ENCODE measurements at regions of chrX and their contacts with region 1.

Region 1: DNA sequence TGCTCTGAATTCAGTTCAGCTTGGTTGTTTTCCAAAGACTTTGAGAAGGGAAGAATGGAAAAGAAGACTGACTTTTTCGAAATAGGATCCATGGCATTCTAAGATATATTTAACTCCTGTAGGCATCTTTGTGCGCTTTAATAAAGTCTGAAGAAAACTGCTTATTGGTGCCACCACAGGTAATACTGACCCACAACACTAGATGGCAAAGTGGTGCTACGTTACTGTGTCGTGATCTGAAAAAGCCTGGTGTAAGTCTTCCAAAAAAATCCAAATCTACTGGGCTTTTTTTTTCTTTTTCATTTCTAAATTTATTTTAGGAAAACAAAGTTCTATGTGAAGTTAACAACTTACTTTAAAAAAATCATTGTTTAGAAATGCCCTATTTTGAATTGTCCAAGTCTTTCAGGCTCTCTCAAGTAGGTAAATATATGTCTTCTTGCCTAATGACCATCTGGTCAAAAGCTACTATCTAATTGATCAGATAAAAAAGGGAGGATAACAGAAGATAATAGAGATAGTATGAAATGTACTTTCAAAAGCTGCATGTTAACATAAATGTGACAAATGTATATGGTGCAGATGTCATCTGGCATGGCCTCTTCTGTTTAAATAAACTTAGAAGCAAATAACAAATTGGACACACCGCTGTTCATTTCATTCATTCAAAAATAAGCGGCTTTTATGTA is 47.0 kb upstream of the MID1IP1 start:
- DNase-seq: peak in 1 of 2 donors; percentile 16
- H3K4me3 ChIP-seq: no peak overlapping the region
- CTCF ChIP-seq: no peak
- POLR2A ChIP-seq: no peak

Region 2: GRCh38 chrX:37697169-37697760 is 1057.0 kb before region 1 on chrX:
- intact Hi-C with region 1: no loop called
- DNase-seq: no peak
- H3K4me3 ChIP-seq: no peak overlapping the region
- CTCF ChIP-seq: no peak
- POLR2A ChIP-seq: no peak

Region 3: DNA sequence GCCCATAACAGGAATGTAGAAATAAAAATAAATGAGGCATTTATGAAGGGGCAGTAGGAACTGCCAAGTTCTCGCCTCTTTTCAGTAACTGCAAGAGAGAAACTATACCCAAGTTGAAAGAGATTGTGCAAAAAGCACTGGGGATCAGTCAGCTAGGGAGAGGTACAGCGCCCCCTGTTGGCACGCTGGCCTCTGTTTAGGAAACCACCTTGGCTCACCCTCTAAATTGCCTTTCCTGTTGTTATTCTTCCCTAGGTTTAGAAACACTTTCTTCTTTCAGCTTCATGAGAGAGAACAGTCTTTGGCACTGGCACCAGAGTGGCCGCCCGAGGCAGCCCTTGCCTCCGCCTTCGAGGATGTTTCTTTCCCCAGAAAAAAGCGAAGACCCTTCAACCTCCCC is 395.5 kb after region 1 on chrX:
- intact Hi-C with region 1: loop called (anchors 10 kb)
- DNase-seq: peak; percentile 51 to 95
- H3K4me3 ChIP-seq: no peak overlapping the region
- CTCF ChIP-seq: peak in 1 of 3 donors; percentile 32
- POLR2A ChIP-seq: no peak

Region 4: DNA sequence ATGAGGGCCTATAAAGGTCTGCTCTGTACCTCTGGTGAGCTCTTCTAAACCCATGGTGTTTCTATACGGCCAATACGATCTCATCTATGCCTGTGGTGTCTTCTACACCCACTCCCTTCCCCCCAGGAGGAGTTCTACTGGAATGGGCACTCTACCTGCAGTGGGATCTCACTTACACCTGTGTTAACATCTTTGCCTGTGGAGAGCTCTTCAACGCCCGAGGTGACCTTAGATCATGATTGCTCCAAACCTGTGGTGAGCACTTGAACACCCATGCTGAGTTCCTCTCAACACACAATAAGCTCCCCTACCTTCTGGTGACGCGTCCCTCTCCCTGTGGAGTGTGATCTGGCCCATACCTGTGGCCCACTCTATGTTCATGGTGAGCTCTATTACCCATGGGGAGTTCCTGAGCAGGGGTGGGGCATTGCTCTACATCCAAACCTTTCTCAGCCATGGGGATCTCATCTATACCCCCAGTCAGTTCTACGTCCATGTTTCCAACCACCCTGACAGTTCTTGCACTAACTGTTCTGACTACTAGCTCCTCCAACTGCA is 1294.9 kb after region 1 on chrX:
- intact Hi-C with region 1: no loop called
- DNase-seq: peak in 1 of 2 donors; percentile 65
- H3K4me3 ChIP-seq: no peak overlapping the region
- CTCF ChIP-seq: no peak
- POLR2A ChIP-seq: no peak

Measured in lower leg skin (tissue), 4 donors.